ENCODE measurements at regions of chr4 and their contacts with region 1.

Region 1: DNA sequence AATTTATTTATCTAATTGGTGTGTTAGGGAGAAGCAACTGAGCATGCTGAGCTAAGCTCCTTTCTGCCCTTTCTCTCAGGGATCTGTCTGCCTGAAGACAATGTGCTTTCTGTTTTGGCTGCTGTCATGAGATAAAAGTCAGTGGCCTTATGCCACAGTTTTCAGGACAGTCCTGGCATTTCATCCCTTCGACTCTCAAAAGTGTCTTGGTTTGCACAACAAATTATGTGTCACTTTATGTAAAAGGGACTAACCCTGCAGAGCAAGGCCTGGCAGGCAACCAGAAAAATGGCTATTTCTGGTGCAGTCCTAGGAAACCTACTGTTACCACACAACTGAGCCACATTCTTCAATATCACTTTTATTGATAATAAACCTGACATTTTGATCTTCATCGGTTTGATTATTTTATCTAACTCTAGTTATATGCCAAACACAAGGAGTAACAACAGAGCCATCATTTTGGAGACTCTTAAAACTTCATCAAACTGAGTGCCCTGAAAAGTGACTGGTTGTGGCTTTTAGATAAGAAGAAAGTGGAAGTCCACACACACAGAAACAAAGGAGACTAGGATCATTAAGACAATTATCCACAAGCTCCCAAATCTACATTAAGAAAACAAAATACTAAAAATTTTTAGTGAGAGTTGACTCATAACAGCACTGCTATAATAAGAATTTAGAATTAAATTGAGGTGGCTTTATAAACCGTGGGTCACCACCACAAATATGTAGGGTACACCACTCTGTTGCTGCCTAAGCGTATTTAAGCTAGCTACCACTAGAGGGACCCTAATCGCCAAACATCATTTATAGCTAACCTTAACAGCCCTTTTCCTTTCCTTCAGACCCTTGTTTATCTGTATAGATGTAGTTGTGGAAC is 95.9 kb upstream of the PTPN13 start:
- DNase-seq: no peak
- H3K4me3 ChIP-seq: no peak overlapping the region
- H3K27me3 ChIP-seq: no peaks in the 10 kb centered on the region
- CTCF ChIP-seq: peak; percentile 84

Region 2: GRCh38 chr4:86482311-86483172 is 15.7 kb before region 1 on chr4:
- CTCF ChIA-PET with region 1: interaction called, 19 read pairs
- POLR2A ChIA-PET with region 1: no interaction called
- DNase-seq: no peak
- H3K4me3 ChIP-seq: no peak overlapping the region
- H3K27me3 ChIP-seq: no peaks in the 10 kb centered on the region
- CTCF ChIP-seq: 0 out of 2 replicates have a peak, but pooled peaks have one; percentile 18

Region 3: DNA sequence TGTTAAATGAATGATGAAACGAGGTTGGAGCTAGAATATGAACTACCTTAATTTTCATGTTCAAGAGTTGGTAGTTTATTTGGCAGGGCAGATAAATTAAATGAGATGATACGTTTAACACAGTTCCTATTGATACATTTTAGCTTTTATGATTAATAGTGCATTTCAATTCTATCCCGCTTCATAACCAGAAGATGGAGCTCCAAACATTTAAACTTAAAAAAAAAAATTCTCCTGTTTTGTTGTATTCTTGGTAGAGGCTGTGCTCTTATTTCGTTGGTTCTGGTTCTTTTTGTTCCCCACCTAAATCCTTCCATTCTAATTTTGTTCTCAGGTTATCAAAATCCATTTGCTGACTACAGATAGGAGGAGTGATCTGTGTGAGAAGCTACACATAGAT is 24.1 kb after region 1 on chr4:
- CTCF ChIA-PET with region 1: interaction called, 16 read pairs
- POLR2A ChIA-PET with region 1: no interaction called
- DNase-seq: no peak
- H3K4me3 ChIP-seq: no peak overlapping the region
- H3K27me3 ChIP-seq: no peaks in the 10 kb centered on the region
- CTCF ChIP-seq: no peak; the same call in 1 of the 2 replicates

Region 4: GRCh38 chr4:86593688-86594558 is 95.7 kb after region 1 on chr4 and contains the start of gene PTPN13:
- CTCF ChIA-PET with region 1: interaction called, 23 read pairs
- POLR2A ChIA-PET with region 1: no interaction called
- DNase-seq: peak; percentile 92
- H3K4me3 ChIP-seq: peak within 1 kb of the TSS; percentile 92
- H3K27me3 ChIP-seq: no peaks in the 10 kb centered on the region
- CTCF ChIP-seq: no peak
- polyA plus RNA-seq, gene PTPN13: 19.4 and 38.4 TPM in 2 replicates

Region 5: GRCh38 chr4:86848732-86849619 is 350.8 kb after region 1 on chr4 and contains the start of gene SLC10A6:
- CTCF ChIA-PET with region 1: interaction called, 10 read pairs
- POLR2A ChIA-PET with region 1: no interaction called
- DNase-seq: no peak
- H3K4me3 ChIP-seq: peak within 1 kb of the TSS; percentile 20
- H3K27me3 ChIP-seq: no peaks in the 10 kb centered on the region
- CTCF ChIP-seq: no peak
- polyA plus RNA-seq, gene SLC10A6: 0.72 and 0.98 TPM in 2 replicates

Region 6: DNA sequence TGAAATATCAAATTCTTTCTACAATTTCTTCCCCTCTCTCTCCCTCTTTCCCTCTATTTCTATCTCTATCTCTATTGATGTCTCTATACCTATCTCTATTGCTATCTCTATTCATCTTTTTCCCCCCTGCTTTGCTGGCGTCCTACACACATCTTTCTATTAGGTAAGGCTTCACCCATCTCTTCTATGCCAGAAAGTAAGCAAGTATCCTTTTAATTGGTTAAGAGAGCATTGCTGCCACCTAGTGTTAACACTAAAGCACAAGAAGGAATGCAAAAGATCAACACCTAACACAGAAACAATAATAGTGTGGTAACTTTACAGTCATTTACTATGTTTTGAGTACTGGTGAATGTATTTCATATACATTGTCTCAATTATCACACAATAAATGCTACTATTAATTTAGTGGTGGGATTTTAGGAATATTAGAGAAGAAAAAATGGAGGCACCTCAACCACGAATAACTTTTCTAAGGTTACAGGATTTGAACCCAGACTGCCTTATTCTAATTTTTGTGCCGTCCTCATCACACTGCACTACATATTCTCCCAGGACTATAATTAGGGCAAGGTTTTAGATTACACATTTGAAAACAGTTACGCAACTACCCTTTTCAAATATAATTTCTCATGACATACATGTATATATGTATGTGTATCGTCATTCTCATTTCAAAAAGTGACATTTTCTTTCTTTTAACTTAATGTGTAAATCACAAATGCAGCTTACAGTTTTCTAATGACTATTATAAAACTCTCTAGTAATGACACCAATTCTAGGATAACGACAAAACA is 397.7 kb after region 1 on chr4:
- CTCF ChIA-PET with region 1: interaction called, 30 read pairs
- POLR2A ChIA-PET with region 1: no interaction called
- DNase-seq: no peak
- H3K4me3 ChIP-seq: no peak overlapping the region
- H3K27me3 ChIP-seq: no peaks in the 10 kb centered on the region
- CTCF ChIP-seq: peak; percentile 64